Cardiac septum (tissue), 1 donor: ENCODE measurements at regions of chr9 and their contacts with region 1.

Region 1: DNA sequence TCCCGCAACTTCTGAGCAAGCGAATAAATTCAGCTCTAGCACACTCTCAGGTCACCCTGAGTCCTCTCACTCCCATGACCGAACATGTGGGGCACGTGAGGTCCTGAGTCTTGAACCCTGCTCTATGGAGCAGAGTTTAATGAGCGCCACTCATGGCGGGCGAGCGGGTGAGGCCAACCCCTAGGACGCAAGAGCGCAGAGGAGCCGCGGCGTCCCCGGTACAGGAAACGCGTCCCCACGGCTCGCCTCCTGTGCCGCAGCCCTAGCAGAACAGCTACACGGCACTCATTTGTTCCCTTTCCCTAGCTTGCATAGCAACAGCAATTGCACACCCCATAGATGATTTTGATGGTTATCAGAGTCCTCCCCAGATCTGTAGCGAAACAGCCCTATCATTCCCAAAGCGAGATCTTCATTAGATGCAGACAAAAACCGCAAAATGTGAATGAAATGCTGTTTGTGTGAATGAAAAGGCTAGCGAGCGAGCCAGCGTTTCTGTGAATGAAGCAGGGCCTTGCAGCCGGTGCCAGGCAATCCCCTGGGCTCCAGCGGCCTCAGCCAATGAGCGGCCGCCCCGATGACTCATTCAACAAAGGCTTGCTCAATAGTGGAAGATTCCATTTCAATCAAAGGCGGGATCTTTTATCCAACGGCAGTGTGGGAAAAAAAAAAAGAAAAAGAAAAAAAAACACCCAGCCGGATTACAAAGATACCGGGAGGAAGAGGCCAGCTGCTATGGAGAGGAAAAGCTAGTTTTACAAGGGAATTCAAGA is 1.5 kb upstream of the SHC3 start:
- DNase-seq: peak; percentile 83

Region 2: DNA sequence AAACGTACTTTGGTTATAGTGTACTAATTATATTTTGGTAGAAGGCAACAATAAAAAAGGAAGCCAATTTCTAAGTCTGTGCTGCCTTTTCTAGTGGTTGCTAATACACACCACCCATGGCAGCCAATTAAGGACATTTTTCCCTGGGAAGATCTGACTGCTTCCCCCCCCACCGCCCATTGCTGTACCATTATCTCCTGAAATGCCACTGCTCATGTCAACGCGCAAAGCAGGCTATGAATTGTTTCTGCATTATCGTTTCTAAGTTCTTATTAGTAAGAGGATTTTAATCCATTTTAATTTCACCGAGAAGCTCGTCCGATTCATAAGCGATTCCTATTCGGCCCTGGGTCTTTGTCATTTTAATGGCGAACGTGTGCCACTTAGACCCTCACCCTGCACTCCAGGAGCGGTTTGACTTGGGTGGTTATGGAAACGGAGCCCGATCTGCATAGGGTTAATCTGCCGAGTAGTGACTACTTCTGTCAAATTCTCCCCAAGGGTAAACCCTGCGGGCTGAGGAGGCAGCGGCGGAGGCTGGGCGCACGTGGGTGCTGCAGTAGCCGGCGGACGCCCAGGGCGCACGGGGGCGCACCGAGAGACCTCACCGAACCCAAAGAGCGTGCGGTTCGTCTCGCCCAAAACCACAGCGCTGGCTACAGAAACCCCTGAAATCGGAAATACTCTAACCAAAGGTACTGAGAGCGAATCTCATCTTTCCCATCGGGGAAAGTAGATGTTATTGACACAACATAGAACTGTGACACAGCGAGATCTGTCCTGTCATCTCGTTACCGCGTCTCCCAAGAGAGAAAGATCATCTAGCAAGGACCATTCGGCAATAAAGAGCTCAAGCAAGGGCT is 54.4 kb after region 1 on chr9:
- intact Hi-C with region 1: loop called (anchors 10 kb)
- DNase-seq: no peak

Region 3: DNA sequence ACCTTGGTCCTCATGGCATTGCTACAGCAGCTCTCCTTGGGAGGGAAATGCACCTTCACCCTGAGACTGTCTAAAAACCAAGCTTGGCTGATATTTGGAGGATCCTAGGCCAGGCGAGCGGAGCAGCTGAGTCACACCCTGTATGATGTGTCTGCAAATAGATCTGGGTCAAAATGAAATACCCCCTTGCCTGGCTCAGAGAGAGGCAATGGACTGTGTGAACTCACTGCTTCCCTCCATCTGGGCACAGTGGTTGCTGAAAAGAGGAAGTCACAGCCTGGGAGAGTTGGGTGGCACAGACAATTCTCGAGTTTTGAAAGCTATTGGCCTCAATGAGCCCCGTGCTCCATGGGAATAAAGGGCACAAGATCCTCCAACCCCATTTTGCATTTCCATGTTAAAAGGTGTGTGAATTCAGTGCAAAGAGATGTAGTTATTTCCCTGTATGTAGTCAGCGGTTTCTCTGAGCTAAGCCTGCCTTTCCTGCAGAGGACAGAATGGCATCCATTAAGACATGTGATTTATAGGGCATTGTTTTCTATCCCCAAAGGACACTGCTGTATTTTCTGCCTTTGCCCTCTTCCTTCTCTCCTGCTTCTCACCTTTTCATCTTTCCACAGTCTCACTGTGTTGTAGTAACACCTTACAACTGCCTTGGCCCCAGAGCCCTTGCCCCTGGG is 601.9 kb after region 1 on chr9:
- intact Hi-C with region 1: no loop called
- DNase-seq: peak; percentile 60